MCF 10A (cell line): ENCODE measurements at regions of chr20 and their contacts with region 1.

Region 1: GRCh38 chr20:25310268-25310920 is 62.5 kb downstream of the PYGB start:
- DNase-seq: peak; percentile 91
- H3K4me3 Mint-ChIP-seq: peak overlapping the region; percentile 56
- H3K27ac Mint-ChIP-seq: peak overlapping the region; percentile 88
- H3K4me1 Mint-ChIP-seq: peaks cover 32% of the 10 kb centered on the region
- H3K27me3 Mint-ChIP-seq: no peaks in the 10 kb centered on the region
- CTCF ChIP-seq: peak; percentile 30

Region 2: GRCh38 chr20:24910461-24910860 is 399.9 kb before region 1 on chr20:
- CTCF ChIA-PET with region 1: no interaction called
- POLR2A ChIA-PET with region 1: no interaction called
- intact Hi-C with region 1: no loop called
- DNase-seq: no peak
- H3K4me3 Mint-ChIP-seq: no peak overlapping the region
- H3K27ac Mint-ChIP-seq: no peak overlapping the region
- H3K4me1 Mint-ChIP-seq: no peaks in the 10 kb centered on the region
- H3K27me3 Mint-ChIP-seq: peaks cover 10% of the 10 kb centered on the region
- CTCF ChIP-seq: no peak

Region 3: GRCh38 chr20:25294459-25295385 is 15.7 kb before region 1 on chr20:
- CTCF ChIA-PET with region 1: interaction called, 36 read pairs
- POLR2A ChIA-PET with region 1: interaction called, 32 read pairs
- intact Hi-C with region 1: no loop called
- DNase-seq: peak; percentile 28
- H3K4me3 Mint-ChIP-seq: no peak overlapping the region
- H3K27ac Mint-ChIP-seq: peak overlapping the region; percentile 75
- H3K4me1 Mint-ChIP-seq: peaks cover 9% of the 10 kb centered on the region
- H3K27me3 Mint-ChIP-seq: no peaks in the 10 kb centered on the region
- CTCF ChIP-seq: peak; percentile 49

Region 4: DNA sequence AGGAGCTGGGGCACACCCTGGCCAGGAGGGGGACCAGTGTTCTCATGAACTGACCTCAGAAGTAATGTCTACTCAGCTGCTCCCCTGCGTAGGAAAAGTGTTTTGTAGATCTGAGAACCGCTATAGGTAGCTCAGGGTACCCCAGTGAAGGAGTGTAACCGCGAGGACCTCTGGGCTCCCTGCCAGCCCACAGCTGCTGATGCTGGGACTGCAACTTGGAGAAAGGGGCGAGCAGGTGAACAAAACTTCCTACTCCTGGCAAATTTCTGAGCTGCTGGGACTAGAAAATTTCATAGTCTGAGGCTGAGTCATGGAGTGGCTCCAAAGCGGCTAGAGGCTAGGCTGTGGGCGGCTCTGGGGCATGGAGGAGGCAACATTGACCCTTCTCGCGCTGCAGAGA is 10.6 kb before region 1 on chr20:
- CTCF ChIA-PET with region 1: interaction called, 36 read pairs
- POLR2A ChIA-PET with region 1: interaction called, 32 read pairs
- intact Hi-C with region 1: no loop called
- DNase-seq: peak; percentile 30
- H3K4me3 Mint-ChIP-seq: no peak overlapping the region
- H3K27ac Mint-ChIP-seq: peak overlapping the region; percentile 64
- H3K4me1 Mint-ChIP-seq: peaks cover 8% of the 10 kb centered on the region
- H3K27me3 Mint-ChIP-seq: no peaks in the 10 kb centered on the region
- CTCF ChIP-seq: no peak